ENCODE measurements at regions of chr1 and their contacts with region 1.

Region 1: DNA sequence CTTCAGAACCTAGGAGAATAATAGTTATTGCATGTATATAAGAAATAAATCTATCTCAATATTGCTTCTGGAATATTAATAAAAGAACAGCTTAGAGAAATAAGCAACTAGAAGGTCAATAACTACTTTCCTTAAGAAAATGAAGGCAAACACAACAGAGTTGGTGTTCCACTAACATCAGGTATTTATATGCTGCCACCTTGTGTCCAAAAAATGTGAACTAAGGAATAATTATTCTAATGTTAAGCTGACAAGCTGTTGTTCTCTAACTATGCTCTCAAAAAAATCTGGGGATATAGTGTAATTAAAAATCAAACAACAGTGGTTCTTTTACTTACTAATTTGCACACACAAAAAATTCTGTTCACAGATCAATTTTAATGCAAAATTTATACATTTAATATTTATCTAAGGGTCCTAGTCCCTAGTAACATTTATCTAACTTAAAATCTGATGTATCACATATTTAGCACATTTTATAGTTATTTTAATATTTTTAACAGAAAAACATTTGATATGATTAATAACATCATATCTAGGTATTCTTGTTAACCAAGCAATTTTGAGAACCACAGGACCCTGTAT is 39.6 kb downstream of the UCHL5 start:
- DNase-seq: no peak
- ATAC-seq: peak in 1 of 2 donors; percentile 53
- H3K4me3 ChIP-seq: no peak overlapping the region
- H3K27ac ChIP-seq: no peak overlapping the region
- H3K4me1 ChIP-seq: no peaks in the 10 kb centered on the region
- H3K27me3 ChIP-seq: no peaks in the 10 kb centered on the region
- CTCF ChIP-seq: peak; percentile 51

Region 2: GRCh38 chr1:192477630-192478029 is 541.9 kb before region 1 on chr1:
- intact Hi-C with region 1: loop called (anchors 10 kb)
- DNase-seq: no peak
- ATAC-seq: peak; percentile 72 to 79
- H3K4me3 ChIP-seq: no peak overlapping the region
- H3K27ac ChIP-seq: no peak overlapping the region
- H3K4me1 ChIP-seq: no peaks in the 10 kb centered on the region
- H3K27me3 ChIP-seq: no peaks in the 10 kb centered on the region
- CTCF ChIP-seq: peak; percentile 52

Region 3: DNA sequence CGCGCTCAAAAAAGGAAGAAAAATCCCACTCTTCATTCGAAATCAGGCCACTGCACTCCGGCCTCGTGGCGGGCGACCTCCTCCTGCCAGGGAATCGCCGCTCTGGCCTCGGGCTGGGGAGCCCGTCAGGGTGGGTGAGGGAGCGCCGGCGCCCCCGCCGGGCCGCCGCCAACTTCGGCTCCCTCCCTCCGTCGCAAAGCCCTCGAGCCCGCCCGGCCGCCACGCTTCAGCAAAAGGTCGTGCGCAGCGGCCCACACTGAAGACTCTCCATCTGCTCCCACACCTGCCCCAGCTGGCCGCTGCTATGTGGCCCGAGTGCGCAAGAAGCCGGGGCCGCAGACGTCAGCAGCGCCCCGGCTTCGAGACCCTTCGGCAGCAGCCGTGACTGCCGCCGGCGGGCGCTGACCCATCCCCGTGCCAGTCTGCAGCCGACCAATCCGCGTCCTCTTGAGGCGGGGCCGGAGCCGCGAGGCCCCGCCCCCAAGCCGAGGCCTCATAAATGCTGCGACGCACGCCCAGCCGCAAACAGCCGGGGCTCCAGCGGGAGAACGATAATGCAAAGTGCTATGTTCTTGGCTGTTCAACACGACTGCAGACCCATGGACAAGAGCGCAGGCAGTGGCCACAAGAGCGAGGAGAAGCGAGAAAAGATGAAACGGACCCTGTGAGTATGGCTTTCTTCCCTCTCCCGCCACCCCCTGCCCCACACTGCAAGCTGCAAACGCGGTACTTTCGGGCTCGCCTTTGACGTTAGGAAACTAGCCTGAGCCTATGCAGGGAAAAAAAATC is 210.8 kb before region 1 on chr1 and contains the start of gene RGS2:
- intact Hi-C with region 1: loop called (anchors 5 kb)
- DNase-seq: peak; percentile 94
- ATAC-seq: peak; percentile 97 to 98
- H3K4me3 ChIP-seq: peak within 1 kb of the TSS; percentile 67
- H3K27ac ChIP-seq: peak within 1 kb of the TSS; percentile 92
- H3K4me1 ChIP-seq: peaks cover 44% of the 10 kb centered on the region
- H3K27me3 ChIP-seq: no peaks in the 10 kb centered on the region
- CTCF ChIP-seq: peak; percentile 38
- total RNA-seq, gene RGS2: 63.8 TPM

Region 4: DNA sequence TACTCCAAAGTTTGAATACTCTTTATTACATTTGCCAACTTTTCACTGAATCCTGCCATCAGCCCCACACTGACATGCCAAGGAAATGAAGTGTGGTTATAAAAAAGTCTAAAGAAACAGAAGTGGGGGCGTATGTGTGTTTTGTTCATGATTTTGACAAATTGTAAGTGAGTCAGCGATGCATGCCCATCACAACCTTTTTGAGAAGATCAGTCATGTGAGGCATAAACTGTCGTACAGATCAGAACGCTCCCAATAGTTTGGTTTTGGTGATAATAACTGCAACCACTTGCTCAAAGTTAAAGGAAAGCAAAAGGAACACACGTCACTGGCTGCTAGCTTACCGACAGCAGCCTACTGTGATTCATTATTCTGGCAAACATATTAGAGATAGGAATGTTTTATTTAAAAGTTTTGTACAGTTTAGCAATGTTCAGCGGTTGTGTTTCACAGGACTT is 115.1 kb before region 1 on chr1:
- intact Hi-C with region 1: no loop called
- DNase-seq: no peak
- ATAC-seq: peak; percentile 54 to 74
- H3K4me3 ChIP-seq: no peak overlapping the region
- H3K27ac ChIP-seq: no peak overlapping the region
- H3K4me1 ChIP-seq: no peaks in the 10 kb centered on the region
- H3K27me3 ChIP-seq: no peaks in the 10 kb centered on the region
- CTCF ChIP-seq: no peak

Region 5: GRCh38 chr1:193094112-193094511 is 74.6 kb after region 1 on chr1:
- intact Hi-C with region 1: no loop called
- DNase-seq: no peak
- ATAC-seq: no peak
- H3K4me3 ChIP-seq: no peak overlapping the region
- H3K27ac ChIP-seq: no peak overlapping the region
- H3K4me1 ChIP-seq: no peaks in the 10 kb centered on the region
- H3K27me3 ChIP-seq: no peaks in the 10 kb centered on the region
- CTCF ChIP-seq: no peak

Measured in lower lobe of right lung (tissue), 2 donors.